Aorta (tissue), 5 donors: ENCODE measurements at regions of chr2 and their contacts with region 1.

Region 1: DNA sequence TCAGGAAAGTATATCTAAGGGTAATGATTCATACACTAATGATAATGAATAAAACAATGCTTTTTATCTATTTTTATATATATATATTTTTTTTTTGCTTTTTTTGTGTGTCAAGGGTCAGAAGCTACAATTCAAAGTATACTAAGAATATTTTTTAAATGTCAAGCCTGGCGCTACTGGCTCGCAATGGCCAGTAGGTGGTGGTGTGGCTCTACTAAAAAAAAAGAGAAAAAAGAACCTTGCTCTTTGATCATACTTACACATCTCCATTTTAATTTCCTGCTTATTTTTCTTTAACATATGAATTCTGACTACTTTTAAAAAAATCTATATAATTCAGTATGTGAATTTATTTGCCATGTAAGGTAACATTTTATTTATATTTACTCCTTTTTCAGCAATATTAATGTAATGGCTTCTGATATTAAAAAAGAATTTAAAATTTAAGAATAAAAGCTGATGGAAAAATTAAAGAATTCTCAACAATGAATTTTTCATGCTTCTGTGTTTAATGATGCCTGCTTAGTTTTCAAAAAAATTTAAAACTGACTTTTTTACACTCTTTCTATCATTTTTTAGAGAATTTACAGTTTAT is 232.9 kb downstream of the GULP1 start:
- DNase-seq: no peak
- ATAC-seq: peak; percentile 82
- H3K4me3 ChIP-seq: no peak overlapping the region
- H3K27ac ChIP-seq: no peak overlapping the region
- H3K4me1 ChIP-seq: no peaks in the 10 kb centered on the region
- H3K27me3 ChIP-seq: no peaks in the 10 kb centered on the region

Region 2: GRCh38 chr2:188485496-188485895 is 39.1 kb before region 1 on chr2:
- intact Hi-C with region 1: no loop called
- DNase-seq: no peak
- ATAC-seq: no peak
- H3K4me3 ChIP-seq: no peak overlapping the region
- H3K27ac ChIP-seq: no peak overlapping the region
- H3K4me1 ChIP-seq: no peaks in the 10 kb centered on the region
- H3K27me3 ChIP-seq: no peaks in the 10 kb centered on the region

Region 3: DNA sequence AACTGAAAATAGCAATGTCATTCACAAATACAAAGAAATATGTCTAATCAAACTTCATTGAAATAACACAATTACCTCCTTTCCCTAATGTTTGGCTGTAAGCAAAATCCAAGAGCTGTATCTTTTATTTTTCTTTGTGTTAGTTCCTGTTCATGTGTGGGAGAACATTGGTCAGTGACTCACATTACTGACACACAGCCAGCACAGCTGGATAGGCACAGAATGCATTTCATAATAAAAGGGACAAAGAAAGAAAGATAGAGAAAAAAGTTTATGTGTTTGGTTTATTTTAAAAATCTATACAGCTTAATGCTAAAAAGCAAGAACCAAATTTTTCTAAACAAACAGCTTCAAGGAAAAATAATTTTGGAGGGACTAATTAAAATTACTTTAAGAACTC is 264.0 kb after region 1 on chr2:
- intact Hi-C with region 1: loop called in 1 of 2 experiments (anchors 10 kb)
- DNase-seq: peak; percentile 80
- ATAC-seq: peak; percentile 72
- H3K4me3 ChIP-seq: no peak overlapping the region
- H3K27ac ChIP-seq: no peak overlapping the region
- H3K4me1 ChIP-seq: peaks cover 0 to 3% of the 10 kb centered on the region in 2 donors
- H3K27me3 ChIP-seq: no peaks in the 10 kb centered on the region

Region 4: GRCh38 chr2:188870289-188870688 is 345.7 kb after region 1 on chr2:
- intact Hi-C with region 1: no loop called
- DNase-seq: no peak
- ATAC-seq: no peak
- H3K4me3 ChIP-seq: no peak overlapping the region
- H3K27ac ChIP-seq: peak overlapping the region; percentile 44 to 57
- H3K4me1 ChIP-seq: peaks cover 6 to 12% of the 10 kb centered on the region in 2 donors
- H3K27me3 ChIP-seq: no peaks in the 10 kb centered on the region

Region 5: DNA sequence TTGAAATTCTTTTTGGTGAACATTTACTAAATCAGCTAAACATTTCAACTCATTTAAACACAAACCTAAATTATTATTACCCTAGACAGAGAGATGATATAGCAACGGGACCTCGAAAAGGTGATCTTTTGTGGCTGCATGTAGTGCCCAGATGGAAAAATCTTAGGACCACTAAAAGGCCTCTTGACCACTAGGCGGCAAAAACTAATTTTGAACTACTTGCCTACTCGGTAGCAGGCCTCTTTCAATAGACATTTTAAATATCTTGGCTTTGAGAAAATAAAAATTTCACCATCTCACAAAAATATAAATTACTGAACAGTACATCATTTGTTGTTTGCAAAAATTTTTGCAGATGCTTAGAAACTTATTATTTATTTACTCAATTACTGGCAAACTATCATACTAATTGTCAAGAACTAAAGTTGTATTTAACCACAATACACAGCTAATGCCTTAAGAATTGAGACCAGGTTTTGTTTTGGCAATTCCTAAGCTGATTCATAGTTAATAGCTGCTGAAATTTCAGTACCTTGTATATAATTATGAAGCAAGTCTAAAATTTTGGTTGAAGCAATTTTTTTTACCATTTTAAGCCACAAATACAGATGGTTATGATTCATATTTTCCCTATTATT is 458.9 kb after region 1 on chr2:
- intact Hi-C with region 1: loop called (anchors 2 to 5 kb)
- DNase-seq: no peak
- ATAC-seq: peak; percentile 47
- H3K4me3 ChIP-seq: no peak overlapping the region
- H3K27ac ChIP-seq: peak overlapping the region in 1 of 2 donors; percentile 63
- H3K4me1 ChIP-seq: no peaks in the 10 kb centered on the region
- H3K27me3 ChIP-seq: no peaks in the 10 kb centered on the region

Region 6: DNA sequence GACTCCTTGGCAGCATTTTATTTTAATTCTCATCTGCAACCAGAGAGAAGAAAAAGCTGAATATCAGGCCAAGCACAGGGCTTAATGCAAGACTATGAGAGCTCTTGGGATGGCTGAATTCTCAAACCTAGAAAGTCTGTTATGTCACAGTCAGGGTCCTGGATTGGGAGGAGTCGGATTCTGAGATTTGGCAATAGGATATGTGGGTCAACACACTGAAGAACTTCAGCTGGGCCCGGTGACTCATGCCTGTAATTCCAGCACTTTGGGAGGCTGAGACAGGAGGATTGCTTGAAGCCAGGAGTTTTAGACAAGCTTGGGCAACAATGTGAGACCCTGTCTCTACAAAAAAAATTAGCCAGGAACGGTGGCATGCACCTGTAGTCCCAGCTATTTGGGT is 552.0 kb after region 1 on chr2:
- intact Hi-C with region 1: loop called in 1 of 2 experiments (anchors 10 kb)
- DNase-seq: peak; percentile 47 to 50
- ATAC-seq: peak; percentile 54
- H3K4me3 ChIP-seq: no peak overlapping the region
- H3K27ac ChIP-seq: no peak overlapping the region
- H3K4me1 ChIP-seq: no peaks in the 10 kb centered on the region
- H3K27me3 ChIP-seq: no peaks in the 10 kb centered on the region